Left cardiac atrium (tissue), 4 donors: ENCODE measurements at regions of chr10 and their contacts with region 1.

Region 1: GRCh38 chr10:132223156-132223590 is 36.4 kb downstream of the DPYSL4 start:
- DNase-seq: peak; percentile 85
- ATAC-seq: peak; percentile 92 to 97

Region 2: GRCh38 chr10:132354356-132355094 is 131.4 kb after region 1 on chr10:
- intact Hi-C with region 1: loop called (anchors 2 to 5 kb)
- DNase-seq: no peak
- ATAC-seq: no peak

Region 3: GRCh38 chr10:132446661-132447194 is 223.6 kb after region 1 on chr10:
- intact Hi-C with region 1: loop called in 1 of 2 experiments (anchors 10 kb)
- DNase-seq: no peak
- ATAC-seq: peak; percentile 48 to 54

Region 4: DNA sequence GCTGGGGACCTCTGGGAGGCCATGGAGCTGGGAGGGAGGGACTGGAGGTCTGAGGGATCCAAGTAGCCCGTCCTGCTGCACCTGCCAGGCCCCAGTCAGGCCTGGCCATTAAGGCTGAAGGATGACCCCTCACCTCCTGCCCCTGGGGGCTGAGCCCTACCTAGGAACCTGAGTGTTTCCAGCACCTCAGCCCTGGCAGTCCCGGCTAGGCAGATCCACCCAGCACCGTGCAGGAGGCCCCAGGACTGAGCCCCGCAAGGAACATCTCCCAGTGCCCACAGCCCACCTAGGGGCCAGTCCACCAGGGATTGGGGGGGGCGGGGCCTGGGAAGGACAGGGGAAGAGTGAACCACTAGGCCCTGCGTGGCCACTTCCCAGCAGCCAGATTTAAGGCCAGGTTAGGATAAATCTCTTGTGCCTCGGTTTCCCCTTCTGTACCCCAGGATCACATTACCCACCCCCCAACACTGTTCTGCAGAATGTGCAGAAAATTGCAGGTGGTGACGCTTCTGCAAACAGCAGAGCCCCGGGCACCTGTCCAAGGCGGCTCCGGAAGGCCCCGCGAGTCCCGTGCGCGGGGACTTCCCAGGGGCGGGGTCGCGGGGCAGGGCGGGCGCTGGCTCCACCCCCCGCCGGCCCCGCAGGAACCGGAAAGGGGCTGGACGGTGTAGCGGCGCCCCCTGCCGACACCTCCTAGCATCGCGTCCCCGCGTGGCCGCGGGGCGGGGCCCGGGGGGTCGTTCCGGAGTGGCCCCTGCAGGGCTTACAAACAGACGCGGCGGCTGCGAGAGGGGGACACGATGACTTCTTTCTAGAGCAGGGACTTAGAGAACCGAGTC is 229.7 kb after region 1 on chr10:
- intact Hi-C with region 1: loop called (anchors 2 to 10 kb)
- DNase-seq: peak; percentile 85
- ATAC-seq: peak; percentile 84 to 91